Right ventricle myocardium inferior (tissue), 1 donor: ENCODE measurements at regions of chr1 and their contacts with region 1.

Region 1: GRCh38 chr1:226407497-226408284 is at the start of gene PARP1:
- DNase-seq: peak; percentile 96
- ATAC-seq: peak; percentile 93
- total RNA-seq, gene PARP1: 154 TPM

Region 2: GRCh38 chr1:226308723-226309315 is 98.9 kb before region 1 on chr1 and contains the start of gene LIN9:
- intact Hi-C with region 1: loop called (anchors 5 kb)
- DNase-seq: peak; percentile 95
- ATAC-seq: peak; percentile 93
- total RNA-seq, gene LIN9: 21.8 TPM

Region 3: DNA sequence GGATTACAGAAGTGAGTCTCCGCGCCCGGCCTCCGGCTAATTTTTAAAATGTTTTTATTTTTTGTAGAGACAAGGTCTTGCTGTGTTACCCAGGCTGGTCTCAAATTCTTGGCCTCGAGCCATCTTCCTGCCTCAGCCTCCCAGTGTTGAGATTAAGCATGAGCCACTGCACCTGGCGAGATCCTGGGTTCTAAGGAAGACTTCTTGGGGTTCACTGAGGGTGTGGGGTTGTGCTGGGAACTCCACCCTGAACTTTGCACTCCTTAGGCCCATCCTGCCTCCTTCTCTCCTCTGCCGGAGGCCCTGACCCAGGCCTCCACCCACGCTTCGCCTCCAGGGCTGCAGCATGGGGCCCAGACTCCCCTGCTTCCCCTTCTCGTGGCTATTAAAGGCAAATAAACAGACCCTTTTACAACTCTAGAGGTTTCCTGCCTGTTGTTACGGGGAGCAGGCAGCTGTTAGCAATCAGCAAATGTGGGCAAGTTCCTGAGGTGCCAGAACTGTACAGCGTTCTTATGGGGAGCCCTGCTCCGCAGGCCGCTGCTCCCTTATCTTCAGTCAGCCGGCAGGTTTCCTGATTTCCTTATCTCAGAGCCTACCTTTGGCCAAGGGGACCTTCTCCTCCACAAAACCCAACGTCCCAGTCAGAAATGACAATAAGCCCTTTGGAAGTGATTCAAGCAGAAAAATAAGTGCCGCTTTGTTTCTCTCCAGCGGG is 57.7 kb before region 1 on chr1:
- intact Hi-C with region 1: no loop called
- DNase-seq: no peak
- ATAC-seq: no peak

Region 4: DNA sequence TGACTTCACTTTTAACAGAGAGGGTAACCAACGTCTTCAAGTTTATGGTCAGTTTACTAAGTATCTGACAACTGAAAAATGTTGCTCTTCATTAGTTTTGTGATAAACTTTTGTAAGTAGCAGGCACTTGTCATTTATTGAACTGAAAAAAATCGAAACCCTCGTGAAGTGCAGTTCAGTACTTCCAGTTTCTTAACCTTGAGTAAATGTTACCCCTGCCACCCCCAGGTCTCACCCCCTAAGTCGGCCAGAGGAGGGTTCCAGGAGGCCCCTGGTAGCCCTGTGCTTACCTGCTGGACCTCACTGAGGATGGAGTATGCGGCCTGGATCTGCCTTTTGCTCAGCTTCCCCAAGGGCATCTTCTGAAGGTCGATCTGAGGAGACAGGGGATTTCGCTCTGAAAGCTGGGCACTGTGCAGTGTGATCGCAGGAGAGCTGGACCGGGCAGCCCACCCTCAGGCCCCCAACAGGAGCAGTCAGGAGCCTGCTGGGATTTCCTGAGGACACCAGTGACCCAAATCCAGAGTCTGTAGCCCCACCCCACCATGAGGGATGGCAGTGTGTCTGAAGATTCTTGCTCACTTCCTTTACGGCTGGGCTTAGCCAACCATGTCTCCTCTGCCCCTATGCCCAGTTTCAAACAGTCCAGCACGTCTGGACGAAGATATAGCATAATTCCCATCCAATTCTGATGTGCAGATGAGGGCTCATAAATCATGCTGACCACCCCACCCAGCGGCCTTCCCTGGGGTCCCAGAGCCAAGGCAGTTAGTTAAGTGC is 37.4 kb before region 1 on chr1:
- intact Hi-C with region 1: loop called (anchors 5 kb)
- DNase-seq: no peak
- ATAC-seq: no peak

Region 5: GRCh38 chr1:226476648-226477319 is 69.1 kb after region 1 on chr1:
- intact Hi-C with region 1: no loop called
- DNase-seq: no peak
- ATAC-seq: no peak